ENCODE measurements at regions of chr3 and their contacts with region 1.

Region 1: GRCh38 chr3:5918626-5919025 is 731.1 kb downstream of the EDEM1 start:
- DNase-seq: no peak
- H3K4me3 ChIP-seq: no peak overlapping the region
- H3K27ac ChIP-seq: no peak overlapping the region
- H3K4me1 ChIP-seq: no peaks in the 10 kb centered on the region
- H3K27me3 ChIP-seq: no peaks in the 10 kb centered on the region
- CTCF ChIP-seq: no peak
- POLR2A ChIP-seq: no peak

Region 2: GRCh38 chr3:5891711-5892110 is 26.9 kb before region 1 on chr3:
- intact Hi-C with region 1: loop called (anchors 1 kb)
- DNase-seq: no peak
- H3K4me3 ChIP-seq: no peak overlapping the region
- H3K27ac ChIP-seq: no peak overlapping the region
- H3K4me1 ChIP-seq: no peaks in the 10 kb centered on the region
- H3K27me3 ChIP-seq: no peaks in the 10 kb centered on the region
- CTCF ChIP-seq: no peak
- POLR2A ChIP-seq: no peak